PC-3 (cell line): ENCODE measurements at regions of chr16 and their contacts with region 1.

Region 1: GRCh38 chr16:2155091-2156021 is at the start of gene TRAF7:
- DNase-seq: peak; percentile 99
- ATAC-seq: peak; percentile 80
- H3K4me3 ChIP-seq: peak within 1 kb of the TSS; percentile 92
- H3K27ac ChIP-seq: peak within 1 kb of the TSS; percentile 69
- H3K4me1 ChIP-seq: peaks cover 35% of the 10 kb centered on the region
- H3K27me3 ChIP-seq: no peaks in the 10 kb centered on the region
- CTCF ChIP-seq: no peak
- total RNA-seq, gene TRAF7: 44.9 and 50.7 TPM in 2 replicates

Region 2: GRCh38 chr16:2071454-2072202 is 83.7 kb before region 1 on chr16:
- CTCF ChIA-PET with region 1: no interaction called
- POLR2A ChIA-PET with region 1: no interaction called
- intact Hi-C with region 1: no loop called
- DNase-seq: no peak
- ATAC-seq: no peak; the same call in 1 of the 2 replicates
- H3K4me3 ChIP-seq: no peak overlapping the region
- H3K27ac ChIP-seq: no peak overlapping the region
- H3K4me1 ChIP-seq: no peaks in the 10 kb centered on the region
- H3K27me3 ChIP-seq: no peaks in the 10 kb centered on the region
- CTCF ChIP-seq: no peak

Region 3: GRCh38 chr16:2090777-2091546 is 64.4 kb before region 1 on chr16:
- CTCF ChIA-PET with region 1: no interaction called
- POLR2A ChIA-PET with region 1: no interaction called
- intact Hi-C with region 1: no loop called
- DNase-seq: peak; percentile 84
- ATAC-seq: peak; percentile 87
- H3K4me3 ChIP-seq: peak overlapping the region; percentile 48
- H3K27ac ChIP-seq: no peak overlapping the region
- H3K4me1 ChIP-seq: peaks cover 8% of the 10 kb centered on the region
- H3K27me3 ChIP-seq: no peaks in the 10 kb centered on the region
- CTCF ChIP-seq: peak; percentile 55

Region 4: DNA sequence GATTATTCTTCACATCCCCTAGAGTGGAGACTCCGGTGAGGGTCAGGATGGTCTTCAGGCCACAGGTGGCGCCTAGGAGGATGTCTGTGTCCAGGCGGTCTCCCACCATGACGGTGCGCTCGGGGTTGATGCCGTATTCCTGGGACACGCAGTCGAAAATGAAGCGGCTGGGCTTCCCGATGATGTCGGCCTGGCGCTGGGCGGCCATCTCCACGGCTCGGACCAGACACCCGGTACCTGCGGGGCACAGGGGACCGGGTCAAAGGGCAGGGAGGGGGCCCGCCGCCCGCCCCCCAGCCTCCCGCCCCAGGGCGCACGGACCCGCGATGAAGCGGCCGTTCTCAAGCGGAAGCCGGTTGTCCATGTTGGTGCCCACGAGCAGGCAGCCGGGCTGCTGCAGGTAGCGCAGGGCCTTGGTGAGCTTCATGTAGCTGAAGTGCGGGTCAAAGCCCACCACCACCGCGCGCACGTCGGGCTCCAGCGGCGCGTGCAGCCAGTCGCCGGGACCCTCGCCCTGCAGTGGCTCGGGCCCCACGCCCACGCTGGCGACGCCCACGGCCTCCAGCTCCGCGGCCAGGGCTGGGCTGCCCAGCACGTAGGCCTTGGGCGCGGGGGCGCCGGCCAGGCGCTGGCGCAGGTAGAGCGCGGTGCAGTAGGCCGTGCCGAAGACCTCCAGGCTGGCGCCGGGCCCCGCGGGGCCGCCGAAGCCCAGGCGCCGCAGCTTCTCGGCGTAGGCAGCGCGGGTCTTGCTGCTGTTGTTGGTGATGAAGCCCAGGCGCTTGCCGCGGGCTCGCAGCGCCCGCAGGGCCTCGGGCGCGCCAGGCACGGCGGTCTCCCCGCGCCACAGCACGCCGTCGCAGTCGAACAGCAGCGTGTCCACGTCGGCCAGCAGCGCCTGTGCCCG is 58.7 kb after region 1 on chr16:
- CTCF ChIA-PET with region 1: no interaction called
- POLR2A ChIA-PET with region 1: no interaction called
- intact Hi-C with region 1: loop called (anchors 2 kb)
- DNase-seq: no peak
- ATAC-seq: no peak
- H3K4me3 ChIP-seq: peak overlapping the region; percentile 92
- H3K27ac ChIP-seq: 0 out of 2 replicates have a peak overlapping the region, but pooled peaks have one; percentile 23
- H3K4me1 ChIP-seq: peaks cover 13% of the 10 kb centered on the region
- H3K27me3 ChIP-seq: no peaks in the 10 kb centered on the region
- CTCF ChIP-seq: no peak

Region 5: GRCh38 chr16:2474877-2475412 is 319.6 kb after region 1 on chr16 and contains the start of gene TBC1D24:
- CTCF ChIA-PET with region 1: no interaction called
- POLR2A ChIA-PET with region 1: interaction called, 11 read pairs
- intact Hi-C with region 1: no loop called
- DNase-seq: peak; percentile 83
- ATAC-seq: peak; percentile 70
- H3K4me3 ChIP-seq: peak within 1 kb of the TSS; percentile 77
- H3K27ac ChIP-seq: no peak within 1 kb of the TSS
- H3K4me1 ChIP-seq: no peaks in the 10 kb centered on the region; the same call in 1 of the 2 replicates
- H3K27me3 ChIP-seq: no peaks in the 10 kb centered on the region
- CTCF ChIP-seq: no peak
- total RNA-seq, gene TBC1D24: 11.3 and 15.2 TPM in 2 replicates